ENCODE measurements at regions of chr1 and their contacts with region 1.

Region 1: DNA sequence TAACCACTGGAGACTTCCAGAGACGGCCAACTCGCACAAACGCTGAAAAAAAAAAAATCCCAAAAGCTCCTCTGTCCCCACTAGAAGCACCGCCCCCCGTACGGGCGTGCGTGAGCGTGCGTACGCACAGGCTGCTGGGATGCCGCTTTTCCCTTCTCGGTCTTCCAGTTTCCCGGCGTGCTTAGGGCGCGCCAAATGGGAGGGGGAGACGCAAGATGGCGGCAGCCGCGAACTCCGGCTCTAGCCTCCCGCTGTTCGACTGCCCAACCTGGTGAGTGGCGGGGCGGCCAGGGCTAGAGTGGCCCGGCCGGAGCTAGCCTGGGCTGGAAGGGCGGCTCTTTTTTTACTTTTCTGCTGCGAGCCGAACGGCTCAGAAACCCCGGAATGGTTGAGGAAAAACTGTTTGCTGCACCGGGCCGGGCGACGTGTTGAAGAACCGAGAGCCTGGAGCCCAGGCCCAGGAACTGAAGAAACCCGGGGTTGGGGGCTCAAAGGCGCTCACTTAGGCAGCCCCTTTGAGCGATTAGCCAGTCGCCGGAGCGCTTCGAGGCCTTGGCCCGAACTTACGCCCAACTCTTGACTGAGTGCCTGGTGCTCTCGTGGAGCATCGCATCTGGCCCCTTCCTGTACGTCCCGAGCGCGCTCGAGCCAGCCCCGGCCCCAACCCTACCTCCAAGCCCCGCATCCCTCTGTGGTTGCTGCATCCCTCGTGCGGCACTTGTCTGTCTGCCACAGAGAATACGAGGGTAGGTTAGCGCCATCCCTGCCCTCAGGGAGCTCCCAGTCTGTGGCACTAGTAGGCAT is at the start of gene PPP1R8:
- DNase-seq: peak; percentile 92
- ATAC-seq: peak; percentile 100
- H3K4me3 Mint-ChIP-seq: peak within 1 kb of the TSS; percentile 94
- H3K27ac Mint-ChIP-seq: peak within 1 kb of the TSS; percentile 98
- H3K4me1 Mint-ChIP-seq: peaks cover 15% of the 10 kb centered on the region
- H3K27me3 Mint-ChIP-seq: no peaks in the 10 kb centered on the region; the same call in 1 of the 2 replicates
- CTCF ChIP-seq: no peak
- total RNA-seq, gene PPP1R8: 39.5 to 43.0 TPM (median 41.9 TPM) in 3 replicates

Region 2: GRCh38 chr1:27725374-27726173 is 105.2 kb before region 1 on chr1 and contains the start of gene FAM76A:
- CTCF ChIA-PET with region 1: interaction called, 14 read pairs
- POLR2A ChIA-PET with region 1: interaction called, 8 read pairs
- DNase-seq: peak; percentile 100
- ATAC-seq: peak; percentile 96
- H3K4me3 Mint-ChIP-seq: peak within 1 kb of the TSS; percentile 84
- H3K27ac Mint-ChIP-seq: peak within 1 kb of the TSS; percentile 90
- H3K4me1 Mint-ChIP-seq: peaks cover 8% of the 10 kb centered on the region
- H3K27me3 Mint-ChIP-seq: peaks cover 11% of the 10 kb centered on the region
- CTCF ChIP-seq: no peak
- total RNA-seq, gene FAM76A: 12.5 to 14.5 TPM (median 12.8 TPM) in 3 replicates

Region 3: DNA sequence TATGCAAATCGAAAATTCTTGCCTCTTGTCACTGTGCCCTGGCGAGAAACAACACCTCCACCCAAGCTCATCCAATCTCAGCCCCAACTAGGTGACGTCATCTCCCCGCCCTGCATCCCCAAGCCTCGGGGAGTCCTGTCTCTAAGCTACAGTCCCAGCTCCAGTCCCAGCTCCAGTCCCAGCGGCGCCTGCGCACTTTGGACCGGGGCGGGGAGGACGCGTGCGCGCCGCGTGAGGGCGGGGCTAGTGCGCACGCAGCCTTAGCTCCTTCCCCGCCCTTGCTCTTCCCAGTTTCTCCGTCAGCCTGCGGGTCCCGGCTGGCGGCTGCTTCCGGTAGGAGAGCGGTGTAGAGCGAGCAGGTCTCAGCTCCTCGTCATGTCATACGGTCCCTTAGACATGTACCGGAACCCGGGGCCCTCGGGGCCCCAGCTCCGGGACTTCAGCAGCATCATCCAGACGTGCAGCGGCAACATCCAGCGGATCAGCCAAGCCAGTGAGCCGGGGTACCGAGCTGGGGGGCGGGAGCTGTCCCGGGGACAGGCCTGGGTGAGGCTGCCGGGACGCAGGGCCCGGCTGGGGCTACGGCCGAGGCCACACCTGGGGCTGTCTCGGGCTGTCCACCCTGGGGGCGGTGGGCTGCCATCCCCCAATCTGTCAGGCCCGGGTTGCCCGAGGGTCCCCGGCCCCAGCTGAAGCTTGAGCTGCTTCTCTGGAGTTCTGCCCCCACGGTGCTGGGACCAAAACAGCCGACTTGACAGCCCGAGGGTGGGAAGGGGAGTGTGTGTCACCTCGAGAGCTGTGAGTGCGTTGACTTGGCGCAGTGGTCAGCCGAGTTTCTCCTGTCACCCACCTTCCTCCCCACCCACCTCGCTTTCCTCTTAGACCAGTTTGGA is 57.6 kb before region 1 on chr1 and contains the start of gene STX12:
- CTCF ChIA-PET with region 1: interaction called, 10 read pairs
- POLR2A ChIA-PET with region 1: interaction called, 8 read pairs
- DNase-seq: peak; percentile 99
- ATAC-seq: peak; percentile 98
- H3K4me3 Mint-ChIP-seq: peak within 1 kb of the TSS; percentile 79
- H3K27ac Mint-ChIP-seq: peak within 1 kb of the TSS; percentile 92
- H3K4me1 Mint-ChIP-seq: peaks cover 12% of the 10 kb centered on the region
- H3K27me3 Mint-ChIP-seq: no peaks in the 10 kb centered on the region; the same call in 1 of the 2 replicates
- CTCF ChIP-seq: no peak
- total RNA-seq, gene STX12: 10.1 to 10.8 TPM (median 10.3 TPM) in 3 replicates

Measured in WTC11 (cell line).